K562 (cell line): ENCODE measurements at regions of chr12 and their contacts with region 1.

Region 1: GRCh38 chr12:55715833-55716581 is at the start of gene BLOC1S1:
- DNase-seq: peak; percentile 96 to 98 (median 97)
- ATAC-seq: peak; percentile 97
- H3K4me3 ChIP-seq: peak within 1 kb of the TSS; percentile 84
- H3K27ac ChIP-seq: peak within 1 kb of the TSS; percentile 88
- H3K4me1 ChIP-seq: peaks cover 18 to 26% of the 10 kb centered on the region in 2 experiments; a peak in 4 of 5 replicates
- H3K27me3 ChIP-seq: no peaks in the 10 kb centered on the region
- CTCF ChIP-seq: no peak; a peak in 1 of 6 replicates
- EP300 ChIP-seq: peak; percentile 49; the same call in 1 of the 2 replicates
- POLR2A ChIP-seq: peak; percentile 77
- RAD21 ChIP-seq: no peak
- polyA plus RNA-seq, gene BLOC1S1: 122 to 139 TPM

Region 2: GRCh38 chr12:54689984-54690383 is 1026.0 kb before region 1 on chr12:
- CTCF ChIA-PET with region 1: no interaction called
- POLR2A ChIA-PET with region 1: no interaction called
- in situ Hi-C with region 1: no loop called
- intact Hi-C with region 1: no loop called
- DNase-seq: peak in 1 of 4 experiments; percentile 4
- ATAC-seq: peak; percentile 59
- H3K4me3 ChIP-seq: no peak overlapping the region
- H3K27ac ChIP-seq: no peak overlapping the region
- H3K4me1 ChIP-seq: no peaks in the 10 kb centered on the region
- H3K27me3 ChIP-seq: no peaks in the 10 kb centered on the region; a peak in 1 of 5 replicates
- CTCF ChIP-seq: peak; percentile 24 to 34 (median 34); a peak in 3 of 6 replicates
- EP300 ChIP-seq: no peak
- POLR2A ChIP-seq: no peak
- RAD21 ChIP-seq: no peak

Region 3: GRCh38 chr12:55681142-55682077 is 34.6 kb before region 1 on chr12:
- CTCF ChIA-PET with region 1: no interaction called
- POLR2A ChIA-PET with region 1: no interaction called
- in situ Hi-C with region 1: no loop called
- intact Hi-C with region 1: loop called (anchors 1 kb)
- DNase-seq: peak in 3 of 4 experiments; percentile 20 to 71 (median 56)
- ATAC-seq: peak; percentile 84
- H3K4me3 ChIP-seq: peak overlapping the region; percentile 29
- H3K27ac ChIP-seq: no peak overlapping the region; the same call in 2 of the 3 replicates
- H3K4me1 ChIP-seq: peaks cover 0 to 11% of the 10 kb centered on the region in 2 experiments; a peak in 2 of 5 replicates
- H3K27me3 ChIP-seq: peaks cover 29 to 50% of the 10 kb centered on the region in 2 experiments
- CTCF ChIP-seq: peak; percentile 55 to 80 (median 64)
- EP300 ChIP-seq: no peak
- POLR2A ChIP-seq: no peak
- RAD21 ChIP-seq: peak in 1 of 2 experiments; percentile 22; a peak in 3 of 4 replicates

Region 4: GRCh38 chr12:55728939-55729823 is 13.2 kb after region 1 on chr12 and contains the start of gene CD63:
- CTCF ChIA-PET with region 1: no interaction called
- POLR2A ChIA-PET with region 1: interaction called, 12 read pairs
- in situ Hi-C with region 1: no loop called
- intact Hi-C with region 1: loop called (anchors 1 kb)
- DNase-seq: peak; percentile 95 to 97 (median 96)
- ATAC-seq: peak; percentile 86
- H3K4me3 ChIP-seq: peak within 1 kb of the TSS; percentile 69
- H3K27ac ChIP-seq: peak within 1 kb of the TSS; percentile 97
- H3K4me1 ChIP-seq: peaks cover 22 to 41% of the 10 kb centered on the region in 2 experiments; a peak in 4 of 5 replicates
- H3K27me3 ChIP-seq: no peaks in the 10 kb centered on the region
- CTCF ChIP-seq: no peak
- EP300 ChIP-seq: peak; percentile 34; the same call in 1 of the 2 replicates
- POLR2A ChIP-seq: peak; percentile 74
- RAD21 ChIP-seq: no peak
- polyA plus RNA-seq, gene CD63: 531 to 576 TPM